SK-N-SH (cell line): ENCODE measurements at regions of chr16 and their contacts with region 1.

Region 1: DNA sequence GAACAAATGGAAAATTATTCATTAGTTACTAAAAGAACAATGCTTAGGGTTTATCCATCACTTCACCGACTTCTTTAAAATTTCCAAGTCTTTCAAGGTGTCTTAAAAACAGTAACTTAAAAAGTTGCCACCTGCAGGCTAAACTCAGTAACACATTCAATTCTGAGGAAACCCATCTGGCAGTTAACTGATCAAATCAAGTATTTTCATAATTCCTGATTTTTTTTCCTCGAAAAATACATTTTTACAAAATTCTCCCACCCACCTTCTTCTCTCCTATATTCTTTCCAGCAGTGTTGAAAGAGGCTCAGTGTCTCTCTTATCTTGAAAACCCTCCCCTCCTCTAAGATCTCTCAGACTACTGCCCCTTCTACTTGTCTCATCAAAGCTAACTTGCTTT is 29.9 kb downstream of the PARN start:
- DNase-seq: peak; percentile 24
- H3K4me3 ChIP-seq: no peak overlapping the region; a peak in 1 of 4 replicates
- H3K27ac ChIP-seq: no peak overlapping the region
- H3K4me1 ChIP-seq: no peaks in the 10 kb centered on the region
- H3K27me3 ChIP-seq: no peaks in the 10 kb centered on the region
- CTCF ChIP-seq: peak; percentile 66
- EP300 ChIP-seq: no peak
- RAD21 ChIP-seq: peak; percentile 31; the same call in 1 of the 2 replicates

Region 2: GRCh38 chr16:14586637-14587305 is 13.4 kb before region 1 on chr16:
- CTCF ChIA-PET with region 1: interaction called, 10 read pairs
- POLR2A ChIA-PET with region 1: no interaction called
- DNase-seq: no peak
- H3K4me3 ChIP-seq: no peak overlapping the region
- H3K27ac ChIP-seq: no peak overlapping the region
- H3K4me1 ChIP-seq: no peaks in the 10 kb centered on the region
- H3K27me3 ChIP-seq: no peaks in the 10 kb centered on the region
- CTCF ChIP-seq: no peak
- EP300 ChIP-seq: no peak
- RAD21 ChIP-seq: no peak